ENCODE measurements at regions of chr5 and their contacts with region 1.

Region 1: DNA sequence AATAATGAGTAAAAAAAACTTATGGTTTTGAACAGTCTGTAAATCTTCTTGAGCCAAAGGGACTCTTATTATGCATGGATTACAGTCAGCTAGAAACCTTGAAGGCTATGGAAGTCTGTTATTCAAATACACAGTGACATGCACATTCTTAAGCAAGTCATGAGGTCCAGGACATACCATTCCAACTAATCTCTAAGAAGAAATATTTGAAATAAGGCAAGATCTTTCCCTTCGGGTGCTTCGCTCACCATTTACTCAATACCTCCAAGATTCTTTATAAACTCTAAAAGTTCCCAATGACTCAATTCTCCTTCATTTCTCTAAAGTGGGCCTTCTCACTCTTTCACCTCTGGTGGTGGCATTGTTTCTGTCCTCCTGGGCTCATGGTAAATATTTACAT is 811.0 kb downstream of the NR2F1-AS1 start:
- DNase-seq: no peak
- H3K4me3 ChIP-seq: no peak overlapping the region
- H3K27ac ChIP-seq: no peak overlapping the region
- H3K4me1 ChIP-seq: no peaks in the 10 kb centered on the region
- H3K27me3 ChIP-seq: no peaks in the 10 kb centered on the region
- CTCF ChIP-seq: no peak
- POLR2A ChIP-seq: no peak

Region 2: GRCh38 chr5:93257616-93258015 is 487.6 kb after region 1 on chr5:
- intact Hi-C with region 1: loop called (anchors 5 kb)
- DNase-seq: no peak
- H3K4me3 ChIP-seq: no peak overlapping the region
- H3K27ac ChIP-seq: no peak overlapping the region
- H3K4me1 ChIP-seq: no peaks in the 10 kb centered on the region
- H3K27me3 ChIP-seq: no peaks in the 10 kb centered on the region
- CTCF ChIP-seq: no peak
- POLR2A ChIP-seq: no peak